ENCODE measurements at regions of chr1 and their contacts with region 1.

Region 1: GRCh38 chr1:87149666-87150065 is 179.0 kb upstream of the LMO4 start:
- DNase-seq: no peak
- ATAC-seq: no peak
- H3K4me3 ChIP-seq: no peak overlapping the region
- H3K27ac ChIP-seq: no peak overlapping the region
- H3K4me1 ChIP-seq: no peaks in the 10 kb centered on the region
- H3K27me3 ChIP-seq: no peaks in the 10 kb centered on the region

Region 2: DNA sequence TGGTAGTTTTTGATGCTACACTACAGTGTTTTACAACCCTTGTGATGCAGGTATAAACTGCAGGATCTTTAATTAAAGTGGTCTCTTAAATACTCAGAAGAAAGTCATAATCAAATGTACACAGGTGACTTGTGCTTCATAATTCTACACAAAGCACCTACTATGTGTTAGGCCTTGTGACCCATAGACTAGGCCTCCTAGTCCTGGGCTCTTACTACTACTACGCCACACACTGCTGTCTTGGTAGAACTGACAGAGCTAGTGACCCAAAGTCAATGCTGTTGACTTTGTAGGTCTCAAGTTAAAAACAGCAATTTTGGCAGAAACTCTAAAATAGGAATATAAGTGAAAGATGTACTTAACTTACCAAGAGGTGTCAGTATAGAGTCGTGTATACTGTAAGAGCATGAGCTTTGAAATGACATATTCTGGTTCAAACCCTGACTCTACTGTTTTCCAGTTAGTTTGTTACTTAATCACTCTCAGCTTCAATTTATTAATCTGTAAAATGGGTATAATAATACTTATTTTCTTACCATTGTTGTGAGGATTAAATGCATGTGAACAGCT is 130.4 kb after region 1 on chr1:
- intact Hi-C with region 1: loop called in 1 of 4 experiments (anchors 10 kb)
- DNase-seq: no peak
- ATAC-seq: no peak
- H3K4me3 ChIP-seq: no peak overlapping the region
- H3K27ac ChIP-seq: peak overlapping the region; percentile 57
- H3K4me1 ChIP-seq: no peaks in the 10 kb centered on the region
- H3K27me3 ChIP-seq: no peaks in the 10 kb centered on the region

Region 3: GRCh38 chr1:87942165-87942564 is 792.5 kb after region 1 on chr1:
- intact Hi-C with region 1: loop called in 1 of 4 experiments (anchors 10 kb)
- DNase-seq: peak in 1 of 3 donors; percentile 49
- ATAC-seq: peak in 1 of 2 donors; percentile 86
- H3K4me3 ChIP-seq: no peak overlapping the region
- H3K27ac ChIP-seq: no peak overlapping the region
- H3K4me1 ChIP-seq: no peaks in the 10 kb centered on the region
- H3K27me3 ChIP-seq: no peaks in the 10 kb centered on the region

Measured in right cardiac atrium (tissue), 5 donors.